Left lung (tissue), 14 donors: ENCODE measurements at regions of chr1 and their contacts with region 1.

Region 1: DNA sequence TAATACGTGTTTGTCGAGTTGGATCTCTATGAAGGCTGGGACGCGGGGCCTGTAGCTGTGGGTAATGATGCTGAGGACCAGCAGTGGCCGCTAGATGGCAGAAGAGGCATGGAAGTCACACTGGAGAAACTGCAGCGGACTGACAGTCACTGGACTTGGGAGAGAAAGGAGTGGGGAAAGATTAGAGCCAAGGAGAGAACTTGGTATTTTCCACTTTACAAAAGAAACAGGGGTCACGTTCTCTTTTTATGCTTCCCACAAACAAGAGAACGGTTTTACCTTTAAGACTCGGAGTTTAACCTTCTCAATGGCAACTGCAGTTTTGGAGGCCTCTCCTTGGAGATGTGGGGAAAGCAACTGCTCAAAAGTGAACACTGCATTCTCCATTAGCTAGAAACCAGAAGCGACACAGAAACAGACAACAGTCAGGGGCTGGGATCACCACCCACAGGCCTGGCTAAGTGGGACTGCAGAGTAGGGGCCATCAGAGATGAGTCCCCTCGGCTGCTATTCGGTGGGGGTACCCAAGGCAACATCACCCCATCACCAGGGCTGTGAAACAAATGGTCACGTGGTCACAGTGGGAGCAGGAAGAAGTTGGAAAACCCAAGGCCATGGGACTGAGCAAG is 51.1 kb upstream of the EDEM3 start:
- DNase-seq: peak; percentile 82 to 92 (median 90)
- ATAC-seq: peak; percentile 100
- H3K4me3 ChIP-seq: no peak overlapping the region
- H3K27ac ChIP-seq: peak overlapping the region in 1 of 2 donors; percentile 84
- H3K4me1 ChIP-seq: peaks cover 0 to 19% of the 10 kb centered on the region in 2 donors
- H3K27me3 ChIP-seq: no peaks in the 10 kb centered on the region
- CTCF ChIP-seq: peak; percentile 79 to 95

Region 2: GRCh38 chr1:184724843-184725242 is 80.9 kb before region 1 on chr1:
- intact Hi-C with region 1: no loop called
- DNase-seq: no peak
- ATAC-seq: no peak
- H3K4me3 ChIP-seq: no peak overlapping the region
- H3K27ac ChIP-seq: no peak overlapping the region
- H3K4me1 ChIP-seq: no peaks in the 10 kb centered on the region
- H3K27me3 ChIP-seq: no peaks in the 10 kb centered on the region
- CTCF ChIP-seq: no peak

Region 3: DNA sequence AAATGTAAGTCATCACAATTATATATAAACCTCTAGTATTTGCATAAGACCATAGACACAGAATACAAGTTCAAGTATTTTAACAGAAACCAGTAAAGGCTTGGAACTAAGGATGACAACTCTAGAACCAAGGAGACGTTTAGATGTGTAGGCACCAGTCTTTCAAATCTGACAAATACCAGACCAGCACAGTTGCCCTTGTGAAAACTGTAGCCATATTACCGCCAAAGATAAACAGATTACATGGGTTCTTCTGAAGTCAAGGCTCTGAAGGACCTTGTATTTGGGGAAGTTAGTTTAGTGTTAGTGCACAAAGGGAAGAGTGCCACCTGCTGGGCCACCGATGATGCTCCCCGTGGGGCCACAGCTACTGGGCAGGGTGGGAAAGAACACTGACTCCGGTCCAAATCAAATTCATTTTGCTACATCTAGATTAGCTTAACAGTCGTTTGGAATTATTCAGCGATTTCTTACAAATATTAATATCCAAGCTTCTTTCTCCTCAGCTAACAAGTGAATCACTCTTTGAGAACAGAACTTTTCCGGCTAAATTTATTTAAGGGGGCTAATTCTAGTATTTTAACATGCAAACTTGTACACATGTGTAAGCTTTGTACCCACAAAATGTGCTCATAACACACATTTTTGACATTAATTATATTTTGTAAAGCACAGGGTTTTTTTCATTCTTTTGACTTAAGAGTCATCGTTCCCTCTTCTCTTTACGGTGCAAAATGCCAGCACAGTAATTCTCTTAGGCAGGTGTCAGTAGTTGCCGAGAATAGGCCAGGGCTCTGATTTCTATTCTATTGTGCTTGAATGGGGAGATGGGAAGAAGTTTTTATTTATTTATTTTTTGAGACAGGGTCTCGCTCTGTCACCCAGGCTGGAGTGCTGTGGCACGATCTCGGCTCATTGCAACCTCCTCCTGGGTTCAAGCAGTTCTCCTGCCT is 176.5 kb after region 1 on chr1:
- intact Hi-C with region 1: loop called (anchors 5 to 10 kb)
- DNase-seq: peak in 3 of 4 donors; percentile 62 to 91 (median 75)
- ATAC-seq: peak; percentile 100
- H3K4me3 ChIP-seq: no peak overlapping the region
- H3K27ac ChIP-seq: peak overlapping the region in 1 of 2 donors; percentile 20
- H3K4me1 ChIP-seq: peaks cover 0 to 5% of the 10 kb centered on the region in 2 donors
- H3K27me3 ChIP-seq: no peaks in the 10 kb centered on the region
- CTCF ChIP-seq: peak; percentile 88 to 92